ENCODE measurements at regions of chr12 and their contacts with region 1.

Region 1: DNA sequence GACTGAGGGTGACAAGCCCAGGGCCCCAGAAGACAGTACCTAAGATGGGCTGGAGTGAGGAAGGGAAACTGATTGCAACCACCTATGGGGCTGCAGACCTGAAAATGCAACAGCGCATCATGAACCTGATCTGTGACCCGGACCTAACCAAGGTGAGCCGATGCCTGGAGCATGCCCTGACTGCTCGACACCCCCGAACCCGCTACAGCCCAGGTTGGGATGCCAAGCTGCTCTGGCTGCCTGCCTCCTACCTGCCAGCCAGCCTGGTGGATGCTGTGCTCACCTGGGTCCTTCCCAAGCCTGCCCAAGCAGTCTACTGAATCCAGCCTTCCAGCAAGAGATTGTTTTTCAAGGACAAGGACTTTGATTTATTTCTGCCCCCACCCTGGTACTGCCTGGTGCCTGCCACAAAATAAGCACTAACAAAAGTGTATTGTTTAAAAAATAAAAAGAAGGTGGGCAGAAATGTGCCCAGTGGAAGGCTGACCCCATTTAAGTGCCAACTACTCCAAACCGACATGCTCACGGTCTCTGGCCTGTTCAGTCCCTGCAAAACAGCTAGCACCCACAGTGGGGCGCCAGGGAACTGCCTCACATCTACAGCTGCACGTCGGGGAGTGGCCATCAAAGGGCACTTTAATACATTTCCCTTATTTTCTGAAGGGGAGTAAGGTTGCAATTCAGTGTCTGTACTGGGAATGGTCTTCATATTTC is 4.2 kb downstream of the RDH5 start:
- DNase-seq: no peak
- H3K27ac ChIP-seq: peak overlapping the region; percentile 99
- CTCF ChIP-seq: peak; percentile 73

Region 2: DNA sequence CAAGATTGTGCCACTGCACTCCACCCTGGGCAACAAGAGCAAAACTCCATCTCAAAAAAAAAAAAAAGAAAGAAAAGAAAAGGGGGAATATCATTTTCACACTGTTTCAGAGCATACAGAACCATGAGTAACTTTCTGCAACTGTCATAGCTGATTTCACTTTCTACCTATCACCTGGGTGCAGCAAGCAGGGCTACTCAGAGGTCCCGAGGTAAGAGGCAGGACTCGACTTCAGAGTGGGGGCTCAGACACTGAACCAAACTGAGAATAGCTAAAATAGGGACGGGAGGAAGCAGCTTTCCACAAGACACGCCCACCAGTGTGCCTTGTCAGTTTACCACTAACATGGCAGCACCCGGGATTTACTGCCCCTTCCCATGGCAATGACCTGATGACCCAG is 57.8 kb before region 1 on chr12:
- CTCF ChIA-PET with region 1: no interaction called
- POLR2A ChIA-PET with region 1: no interaction called
- DNase-seq: no peak
- H3K27ac ChIP-seq: no peak overlapping the region
- CTCF ChIP-seq: no peak

Region 3: GRCh38 chr12:55738123-55739024 is 14.0 kb after region 1 on chr12:
- CTCF ChIA-PET with region 1: interaction called, 11 read pairs
- POLR2A ChIA-PET with region 1: no interaction called
- DNase-seq: peak; percentile 59
- H3K27ac ChIP-seq: peak overlapping the region; percentile 81
- CTCF ChIP-seq: peak; percentile 79

Measured in RWPE1 (cell line).